CD8-positive, alpha-beta T cell (primary cell): ENCODE measurements at regions of chr6 and their contacts with region 1.

Region 1: DNA sequence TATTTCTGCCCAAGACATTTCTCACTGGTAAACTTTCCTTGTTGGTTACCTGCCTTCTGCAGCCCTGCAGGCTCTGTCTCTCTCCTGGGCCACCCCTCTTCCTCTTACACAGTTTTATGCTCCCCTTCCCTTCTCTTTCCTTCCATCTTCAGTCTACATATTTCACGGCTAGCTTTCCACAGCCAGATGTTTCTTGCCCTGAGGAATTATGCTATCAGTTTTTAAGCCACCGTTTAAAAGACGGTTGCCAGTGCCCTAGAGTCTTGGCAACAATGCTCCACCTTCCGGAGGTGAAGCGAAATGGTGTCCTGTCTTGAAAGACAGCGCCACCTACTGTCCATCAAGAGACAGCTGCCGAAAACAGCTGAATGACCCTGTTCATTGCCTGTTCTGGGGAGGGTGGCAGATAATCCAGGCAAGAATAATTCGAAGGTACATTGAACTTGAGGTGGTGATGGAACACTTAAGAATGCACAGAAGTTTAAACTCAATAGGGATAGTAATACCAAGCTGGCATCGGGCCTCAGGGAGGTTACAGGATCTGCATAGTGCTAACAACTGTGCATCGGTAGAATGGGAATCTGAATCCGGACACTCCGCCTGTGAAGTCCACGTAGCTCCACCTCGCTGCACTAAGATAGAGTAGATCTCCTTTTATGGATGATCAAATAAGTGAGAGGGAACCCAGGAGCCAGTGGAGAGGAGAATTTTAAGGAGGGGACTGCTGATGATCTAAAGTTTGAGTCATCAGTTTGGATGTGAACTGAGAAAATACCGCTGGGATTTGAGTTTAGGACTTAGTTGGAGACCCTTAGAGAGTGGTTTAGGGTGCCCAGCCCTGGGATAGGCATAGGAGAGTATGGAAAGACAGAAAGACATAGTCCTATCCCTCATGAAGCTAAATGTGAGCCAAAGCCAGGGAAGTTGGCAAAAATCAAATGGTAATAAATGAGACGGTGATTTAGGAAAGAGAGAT is 4.8 kb upstream of the TRIM40 start:
- DNase-seq: peak; percentile 25 to 92 (median 70)
- ATAC-seq: peak; percentile 98
- H3K4me3 ChIP-seq: no peak overlapping the region
- H3K4me3 Mint-ChIP-seq: no peak overlapping the region
- H3K27ac ChIP-seq: no peak overlapping the region
- H3K27ac Mint-ChIP-seq: no peak overlapping the region
- H3K4me1 ChIP-seq: peaks cover 6% of the 10 kb centered on the region
- H3K4me1 Mint-ChIP-seq: peaks cover 3% of the 10 kb centered on the region
- H3K27me3 ChIP-seq: peaks cover 10 to 11% of the 10 kb centered on the region in 2 experiments
- H3K27me3 Mint-ChIP-seq: peaks cover 65% of the 10 kb centered on the region
- CTCF ChIP-seq: peak; percentile 99

Region 2: GRCh38 chr6:29847871-29848630 is 283.1 kb before region 1 on chr6:
- CTCF ChIA-PET with region 1: interaction called, 56 read pairs
- POLR2A ChIA-PET with region 1: no interaction called
- intact Hi-C with region 1: loop called in 1 of 2 experiments (anchors 1 kb)
- DNase-seq: peak; percentile 74 to 94 (median 85)
- ATAC-seq: peak; percentile 86
- H3K4me3 ChIP-seq: no peak overlapping the region
- H3K4me3 Mint-ChIP-seq: no peak overlapping the region
- H3K27ac ChIP-seq: no peak overlapping the region
- H3K27ac Mint-ChIP-seq: no peak overlapping the region
- H3K4me1 ChIP-seq: peaks cover 3% of the 10 kb centered on the region
- H3K4me1 Mint-ChIP-seq: peaks cover 8% of the 10 kb centered on the region
- H3K27me3 ChIP-seq: peaks cover 11 to 23% of the 10 kb centered on the region in 2 experiments
- H3K27me3 Mint-ChIP-seq: peaks cover 58% of the 10 kb centered on the region
- CTCF ChIP-seq: peak; percentile 97

Region 3: DNA sequence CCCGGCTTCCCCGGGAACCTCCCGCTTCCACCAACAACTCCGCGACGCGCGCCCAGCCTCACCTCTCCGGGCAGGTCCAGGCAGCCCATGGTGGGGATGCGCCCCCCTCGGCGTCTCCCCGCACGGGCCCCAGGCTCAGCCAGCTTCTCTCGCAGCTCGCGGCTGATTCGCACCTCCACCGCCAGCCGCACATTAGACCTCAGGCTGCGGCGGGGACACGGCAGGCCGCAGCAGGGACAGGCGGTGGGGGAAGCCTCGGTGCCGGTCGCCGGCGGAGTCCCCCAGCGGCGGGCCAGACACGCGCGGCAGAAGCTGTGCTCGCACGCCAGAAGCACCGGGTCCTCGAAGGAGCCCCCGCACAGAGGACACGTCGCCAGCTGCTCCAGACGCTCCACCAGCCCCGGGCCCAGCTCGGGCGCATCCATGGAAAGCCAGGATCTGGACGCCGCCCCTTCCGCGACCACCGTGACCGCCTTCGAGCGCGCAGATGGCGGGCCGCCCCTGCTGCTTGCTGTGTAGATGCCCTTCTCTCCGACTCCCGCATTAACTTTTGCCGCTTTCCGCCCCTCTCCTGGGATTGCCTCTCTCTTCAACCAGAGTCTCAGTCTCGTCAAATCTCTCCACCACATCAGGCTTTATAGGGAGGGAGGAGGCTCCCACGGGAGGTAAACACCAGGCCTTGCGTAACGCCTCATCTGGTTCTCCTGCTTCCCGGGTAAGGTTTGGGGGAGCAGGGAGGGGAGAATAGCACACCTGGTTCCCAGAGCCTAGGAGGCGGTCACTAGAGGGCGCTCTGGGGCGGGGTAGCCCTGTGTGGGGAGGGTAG is 55.8 kb before region 1 on chr6 and contains the start of gene RNF39:
- CTCF ChIA-PET with region 1: interaction called, 12 read pairs
- POLR2A ChIA-PET with region 1: no interaction called
- intact Hi-C with region 1: no loop called
- DNase-seq: peak in 2 of 9 experiments; percentile 39 to 46
- ATAC-seq: peak; percentile 50
- H3K4me3 ChIP-seq: peak within 1 kb of the TSS in 1 of 2 experiments; percentile 34
- H3K4me3 Mint-ChIP-seq: peak within 1 kb of the TSS; percentile 72
- H3K27ac ChIP-seq: no peak within 1 kb of the TSS
- H3K27ac Mint-ChIP-seq: no peak within 1 kb of the TSS
- H3K4me1 ChIP-seq: peaks cover 42% of the 10 kb centered on the region
- H3K4me1 Mint-ChIP-seq: peaks cover 41% of the 10 kb centered on the region
- H3K27me3 ChIP-seq: peaks cover 26 to 33% of the 10 kb centered on the region in 2 experiments
- H3K27me3 Mint-ChIP-seq: peaks cover 54% of the 10 kb centered on the region
- CTCF ChIP-seq: peak; percentile 25
- total RNA-seq, gene RNF39: not detected

Region 4: DNA sequence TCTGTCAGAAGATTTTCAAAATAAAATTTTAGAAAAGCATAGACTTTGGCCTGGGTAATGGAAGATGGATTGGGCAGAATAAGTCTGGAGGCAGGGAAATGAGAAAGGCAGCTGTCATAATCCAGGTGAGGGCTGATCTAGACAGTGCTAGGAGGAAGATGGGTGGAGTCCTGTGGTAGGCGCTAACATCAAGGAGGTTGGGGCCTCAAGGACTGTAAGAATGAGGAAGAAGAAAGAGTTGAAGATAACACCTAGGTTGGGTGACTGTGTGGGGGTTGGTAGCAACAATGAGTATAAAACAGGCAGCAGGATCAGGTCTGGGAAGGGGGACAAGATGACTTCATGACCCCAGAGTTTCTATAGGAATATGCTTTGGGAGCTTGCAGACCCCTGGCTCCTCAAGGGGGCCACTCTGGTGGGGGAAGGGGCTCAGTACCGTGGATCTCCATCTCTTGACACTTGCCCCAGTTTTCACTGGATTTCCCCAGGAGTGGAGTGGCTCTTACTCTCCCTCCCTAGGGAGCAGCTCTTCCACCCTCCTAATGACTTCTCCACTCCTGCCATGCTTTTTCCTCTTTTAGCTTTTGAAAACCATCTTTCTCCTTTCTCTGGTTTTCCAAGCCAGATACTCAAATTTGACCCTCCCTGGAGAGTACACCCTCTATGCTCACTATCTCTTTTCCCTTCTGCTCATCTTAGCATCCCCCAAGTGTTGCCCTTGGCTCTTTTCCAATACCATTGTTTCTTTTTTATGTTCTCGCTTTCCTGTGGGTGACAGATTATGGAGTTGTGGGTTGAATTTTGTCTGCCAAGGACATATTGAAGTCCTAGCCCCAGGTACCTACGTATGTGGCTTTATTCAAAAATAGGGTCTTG is 33.0 kb before region 1 on chr6:
- CTCF ChIA-PET with region 1: interaction called, 250 read pairs
- POLR2A ChIA-PET with region 1: interaction called, 21 read pairs
- intact Hi-C with region 1: loop called (anchors 1 kb)
- DNase-seq: peak in 2 of 9 experiments; percentile 17 to 37
- ATAC-seq: peak; percentile 63
- H3K4me3 ChIP-seq: no peak overlapping the region
- H3K4me3 Mint-ChIP-seq: no peak overlapping the region
- H3K27ac ChIP-seq: no peak overlapping the region
- H3K27ac Mint-ChIP-seq: no peak overlapping the region
- H3K4me1 ChIP-seq: peaks cover 37% of the 10 kb centered on the region
- H3K4me1 Mint-ChIP-seq: peaks cover 43% of the 10 kb centered on the region
- H3K27me3 ChIP-seq: peaks cover 0 to 26% of the 10 kb centered on the region in 2 experiments
- H3K27me3 Mint-ChIP-seq: peaks cover 57% of the 10 kb centered on the region
- CTCF ChIP-seq: no peak

Region 5: DNA sequence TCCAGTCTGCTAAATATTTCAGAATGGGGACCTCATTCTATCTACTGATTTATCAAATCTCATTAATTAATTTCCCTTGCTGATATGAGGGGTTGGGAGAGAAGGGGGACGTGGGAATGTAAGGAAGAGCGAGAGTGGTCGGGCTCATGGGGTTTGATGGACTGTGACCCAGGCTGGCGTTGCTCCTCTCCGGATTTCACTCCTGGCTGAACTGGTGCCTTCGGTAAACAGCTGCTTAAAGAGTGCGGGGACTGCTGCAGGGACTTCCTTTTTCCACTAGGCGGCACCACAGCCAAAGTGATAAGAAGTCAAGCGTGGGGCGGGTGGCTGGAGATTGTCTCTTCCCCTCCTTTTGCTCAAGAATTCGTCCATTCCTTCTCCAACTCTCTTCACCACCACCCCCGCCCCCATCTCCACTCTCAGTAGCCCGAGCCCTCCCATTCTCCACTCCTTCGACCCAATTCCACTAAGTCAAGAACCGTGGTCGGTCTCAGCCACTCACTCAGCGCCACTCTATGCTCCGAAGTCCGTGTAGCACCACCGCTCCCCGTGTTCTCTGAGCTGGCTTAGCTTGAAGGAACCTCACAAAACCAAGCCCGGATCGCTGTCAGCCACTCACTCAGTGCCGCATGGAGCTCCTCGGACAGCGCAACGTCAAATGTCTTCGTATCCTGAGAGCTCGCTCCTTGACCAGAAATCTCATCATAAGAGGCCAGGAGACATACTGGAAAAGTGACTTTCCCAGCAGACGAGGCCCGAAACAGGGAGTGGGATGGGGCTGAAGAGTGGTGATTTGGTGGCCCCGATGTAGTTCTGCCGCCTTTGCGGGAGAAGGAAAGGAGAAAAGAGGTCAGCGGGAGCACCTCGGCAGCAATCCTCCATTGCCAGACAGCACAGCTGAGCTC is 28.0 kb before region 1 on chr6:
- CTCF ChIA-PET with region 1: interaction called, 250 read pairs
- POLR2A ChIA-PET with region 1: interaction called, 21 read pairs
- intact Hi-C with region 1: loop called (anchors 1 kb)
- DNase-seq: peak; percentile 72 to 91 (median 83)
- ATAC-seq: peak; percentile 89
- H3K4me3 ChIP-seq: peak overlapping the region; percentile 51 to 64
- H3K4me3 Mint-ChIP-seq: peak overlapping the region; percentile 87
- H3K27ac ChIP-seq: peak overlapping the region in 1 of 2 experiments; percentile 42
- H3K27ac Mint-ChIP-seq: peak overlapping the region; percentile 56
- H3K4me1 ChIP-seq: peaks cover 38% of the 10 kb centered on the region
- H3K4me1 Mint-ChIP-seq: peaks cover 40% of the 10 kb centered on the region
- H3K27me3 ChIP-seq: peaks cover 0 to 23% of the 10 kb centered on the region in 2 experiments
- H3K27me3 Mint-ChIP-seq: peaks cover 41% of the 10 kb centered on the region
- CTCF ChIP-seq: peak; percentile 91

Region 6: GRCh38 chr6:30113003-30113759 is 18.0 kb before region 1 on chr6 and contains the start of gene TRIM31:
- CTCF ChIA-PET with region 1: interaction called, 35 read pairs
- POLR2A ChIA-PET with region 1: no interaction called
- intact Hi-C with region 1: no loop called
- DNase-seq: no peak
- ATAC-seq: no peak
- H3K4me3 ChIP-seq: no peak within 1 kb of the TSS
- H3K4me3 Mint-ChIP-seq: no peak within 1 kb of the TSS
- H3K27ac ChIP-seq: no peak within 1 kb of the TSS
- H3K27ac Mint-ChIP-seq: no peak within 1 kb of the TSS
- H3K4me1 ChIP-seq: no peaks in the 10 kb centered on the region
- H3K4me1 Mint-ChIP-seq: no peaks in the 10 kb centered on the region
- H3K27me3 ChIP-seq: peaks cover 2 to 6% of the 10 kb centered on the region in 2 experiments
- H3K27me3 Mint-ChIP-seq: peaks cover 46% of the 10 kb centered on the region
- CTCF ChIP-seq: no peak
- total RNA-seq, gene TRIM31: not detected

Region 7: GRCh38 chr6:30147062-30147461 is 15.9 kb after region 1 on chr6:
- CTCF ChIA-PET with region 1: interaction called, 13 read pairs
- POLR2A ChIA-PET with region 1: no interaction called
- intact Hi-C with region 1: no loop called
- DNase-seq: no peak
- ATAC-seq: no peak
- H3K4me3 ChIP-seq: no peak overlapping the region
- H3K4me3 Mint-ChIP-seq: no peak overlapping the region
- H3K27ac ChIP-seq: no peak overlapping the region
- H3K27ac Mint-ChIP-seq: no peak overlapping the region
- H3K4me1 ChIP-seq: no peaks in the 10 kb centered on the region
- H3K4me1 Mint-ChIP-seq: no peaks in the 10 kb centered on the region
- H3K27me3 ChIP-seq: no peaks in the 10 kb centered on the region
- H3K27me3 Mint-ChIP-seq: peaks cover 35% of the 10 kb centered on the region
- CTCF ChIP-seq: no peak

Region 8: DNA sequence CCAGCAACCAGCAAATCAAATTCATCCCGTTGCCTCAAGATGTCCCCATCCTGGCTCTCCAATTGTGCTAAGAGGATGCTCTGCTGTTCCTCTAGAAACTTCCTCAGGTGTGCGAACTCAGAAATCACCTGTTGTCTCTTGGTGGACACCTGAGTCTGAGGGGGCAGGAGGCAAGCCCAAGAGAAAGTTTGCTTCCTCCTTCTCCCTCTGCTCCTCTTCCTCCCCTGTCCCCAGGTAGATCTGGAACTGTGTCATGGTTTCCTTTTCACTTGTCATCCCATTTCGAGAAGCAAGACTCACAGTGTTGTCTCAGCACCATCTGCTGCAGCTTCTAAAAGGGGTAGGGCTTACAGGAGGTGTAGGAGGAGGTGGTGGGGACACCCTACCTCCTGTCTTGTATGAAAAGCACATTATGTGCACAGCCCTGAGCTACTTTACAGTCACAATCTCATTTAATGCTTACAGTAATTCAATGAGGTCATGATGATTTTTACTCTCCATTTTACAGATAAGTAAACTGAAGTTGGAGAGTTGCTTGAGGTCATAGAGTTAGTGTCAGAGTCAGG is 27.4 kb after region 1 on chr6:
- CTCF ChIA-PET with region 1: no interaction called
- POLR2A ChIA-PET with region 1: no interaction called
- intact Hi-C with region 1: no loop called
- DNase-seq: no peak
- ATAC-seq: no peak
- H3K4me3 ChIP-seq: no peak overlapping the region
- H3K4me3 Mint-ChIP-seq: no peak overlapping the region
- H3K27ac ChIP-seq: no peak overlapping the region
- H3K27ac Mint-ChIP-seq: no peak overlapping the region
- H3K4me1 ChIP-seq: peaks cover 4% of the 10 kb centered on the region
- H3K4me1 Mint-ChIP-seq: peaks cover 5% of the 10 kb centered on the region
- H3K27me3 ChIP-seq: peaks cover 0 to 13% of the 10 kb centered on the region in 2 experiments
- H3K27me3 Mint-ChIP-seq: peaks cover 32% of the 10 kb centered on the region
- CTCF ChIP-seq: no peak